Activated CD4-positive, alpha-beta memory T cell treated with anti-CD3 and anti-CD28 coated beads for 36 hours (primary cell): ENCODE measurements at regions of chr1 and their contacts with region 1.

Region 1: DNA sequence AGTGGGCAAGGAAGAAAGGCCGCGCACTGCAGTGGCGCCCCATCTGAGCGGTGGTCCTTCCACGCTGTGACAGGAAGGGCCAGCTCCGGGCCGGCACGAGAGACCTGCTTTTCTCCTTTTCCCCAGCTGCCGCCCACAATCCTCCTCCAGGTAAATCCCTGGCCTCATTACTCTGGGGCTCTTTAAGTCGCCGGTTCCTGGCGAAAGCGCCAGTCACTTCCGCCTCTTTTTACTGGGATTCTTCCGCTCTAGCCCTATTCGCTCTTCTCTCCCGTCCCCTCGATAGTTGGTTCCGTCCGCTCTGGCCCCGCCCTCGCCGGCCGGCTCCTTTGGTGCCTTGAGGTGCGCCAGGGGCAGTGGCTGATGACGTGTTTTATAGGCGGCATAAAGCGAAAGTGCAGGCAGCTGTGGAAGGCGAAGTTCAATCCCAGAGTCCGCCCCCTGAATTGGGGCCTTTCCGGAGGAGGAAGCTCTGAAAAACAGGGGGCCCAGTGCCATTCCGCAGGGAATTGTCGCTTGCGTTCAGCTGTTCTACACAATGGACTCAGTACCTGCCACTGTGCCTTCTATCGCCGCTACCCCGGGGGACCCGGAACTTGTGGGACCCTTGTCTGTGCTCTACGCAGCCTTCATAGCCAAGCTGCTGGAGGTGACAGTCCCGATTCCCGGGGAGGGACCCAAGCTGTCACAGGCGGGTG is 26.2 kb downstream of the MIA3 start:
- DNase-seq: peak; percentile 99
- H3K4me3 Mint-ChIP-seq: peak overlapping the region; percentile 99
- H3K27ac Mint-ChIP-seq: peak overlapping the region; percentile 94
- H3K4me1 Mint-ChIP-seq: peaks cover 22% of the 10 kb centered on the region
- H3K27me3 Mint-ChIP-seq: no peaks in the 10 kb centered on the region

Region 2: DNA sequence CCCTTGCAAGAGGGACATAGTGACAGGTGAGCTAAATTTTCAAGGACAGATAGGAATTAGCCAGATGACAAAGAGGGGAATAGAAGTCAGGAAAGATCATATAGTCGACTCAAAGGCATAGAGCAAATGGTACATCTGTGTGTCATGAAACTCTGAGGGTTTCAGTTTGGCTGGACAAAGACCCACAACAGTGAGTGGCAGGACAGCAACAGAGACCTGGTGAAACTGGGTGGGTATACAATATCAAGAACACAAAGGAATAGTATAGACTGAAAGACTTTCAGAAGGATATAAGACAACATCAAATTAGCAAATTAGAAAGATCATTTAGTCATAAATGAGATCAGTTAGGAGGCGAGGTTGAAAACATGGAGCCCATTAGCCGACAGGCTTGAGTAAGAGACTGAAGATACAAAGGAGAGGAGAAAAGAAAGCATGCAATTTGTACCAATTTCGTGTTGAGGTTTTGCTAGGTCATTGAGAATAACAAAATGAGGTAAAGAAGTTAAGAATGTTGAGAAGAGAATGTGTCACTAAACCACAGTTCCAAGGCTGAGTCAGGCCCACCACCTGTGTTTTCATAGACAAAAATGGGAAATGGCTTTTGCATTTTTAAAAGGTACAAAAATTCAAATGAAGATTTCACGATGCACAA is 309.9 kb before region 1 on chr1:
- CTCF ChIA-PET with region 1: no interaction called
- POLR2A ChIA-PET with region 1: no interaction called
- intact Hi-C with region 1: no loop called
- DNase-seq: peak; percentile 40
- H3K4me3 Mint-ChIP-seq: no peak overlapping the region
- H3K27ac Mint-ChIP-seq: no peak overlapping the region
- H3K4me1 Mint-ChIP-seq: no peaks in the 10 kb centered on the region
- H3K27me3 Mint-ChIP-seq: no peaks in the 10 kb centered on the region

Region 3: GRCh38 chr1:222654849-222655248 is 10.8 kb after region 1 on chr1:
- CTCF ChIA-PET with region 1: interaction called, 3 read pairs
- POLR2A ChIA-PET with region 1: interaction called, 17 read pairs
- intact Hi-C with region 1: loop called (anchors 1 kb)
- DNase-seq: peak; percentile 81
- H3K4me3 Mint-ChIP-seq: peak overlapping the region; percentile 14
- H3K27ac Mint-ChIP-seq: peak overlapping the region; percentile 64
- H3K4me1 Mint-ChIP-seq: peaks cover 49% of the 10 kb centered on the region
- H3K27me3 Mint-ChIP-seq: no peaks in the 10 kb centered on the region

Region 4: DNA sequence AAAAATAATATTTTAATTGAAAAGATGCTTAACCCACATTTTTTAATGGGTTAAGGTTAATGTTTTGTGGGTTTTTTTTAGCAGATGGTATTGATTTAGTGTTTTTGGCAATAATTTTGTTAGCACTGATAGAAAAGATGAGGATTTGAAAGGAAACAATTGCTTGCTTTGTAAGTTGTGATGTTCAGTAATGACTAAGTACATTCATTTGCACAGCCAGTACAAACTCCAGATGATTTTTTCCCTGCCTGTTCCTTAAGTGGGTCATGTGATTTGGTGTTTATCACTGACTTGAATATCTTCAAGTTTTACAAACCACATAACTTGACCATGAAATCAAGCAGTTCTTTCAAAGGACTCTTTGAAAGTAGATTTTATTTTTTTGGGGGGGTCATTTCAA is 185.8 kb after region 1 on chr1:
- CTCF ChIA-PET with region 1: no interaction called
- POLR2A ChIA-PET with region 1: no interaction called
- intact Hi-C with region 1: no loop called
- DNase-seq: no peak
- H3K4me3 Mint-ChIP-seq: no peak overlapping the region
- H3K27ac Mint-ChIP-seq: no peak overlapping the region
- H3K4me1 Mint-ChIP-seq: no peaks in the 10 kb centered on the region
- H3K27me3 Mint-ChIP-seq: no peaks in the 10 kb centered on the region